ENCODE measurements at regions of chr19 and their contacts with region 1.

Region 1: DNA sequence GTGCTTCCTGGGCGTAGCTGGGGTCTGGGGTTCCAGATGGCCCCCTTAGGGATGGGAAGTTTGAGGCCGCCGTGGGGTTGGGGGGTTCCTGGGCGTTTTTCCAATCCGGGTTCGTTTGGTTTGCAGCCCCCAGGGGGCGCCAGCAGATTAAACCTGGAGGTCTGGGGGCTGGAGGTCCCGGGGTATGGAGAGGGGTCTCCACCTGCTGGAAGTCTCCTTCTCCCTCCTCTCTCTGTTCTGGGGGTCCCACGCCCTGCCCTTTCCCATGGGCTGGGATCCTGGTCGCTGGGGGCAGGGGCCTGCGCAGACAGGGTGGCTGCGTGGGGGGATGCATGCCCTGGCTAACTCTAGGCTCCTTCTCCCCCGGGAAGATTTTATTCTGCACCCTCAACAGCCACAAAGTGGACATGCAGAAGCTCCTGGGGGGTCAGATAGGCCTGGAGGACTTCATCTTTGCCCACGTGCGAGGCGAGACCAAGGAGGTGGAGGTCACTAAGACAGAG is 897 bp downstream of the GIPC3 start:
- DNase-seq: peak in 8 of 9 experiments; percentile 31 to 79 (median 56)
- ATAC-seq: peak; percentile 63
- H3K4me3 ChIP-seq: peak overlapping the region; percentile 45 to 51
- H3K4me3 Mint-ChIP-seq: peak overlapping the region; percentile 53
- H3K27ac ChIP-seq: no peak overlapping the region
- H3K27ac Mint-ChIP-seq: no peak overlapping the region
- H3K4me1 ChIP-seq: no peaks in the 10 kb centered on the region
- H3K4me1 Mint-ChIP-seq: no peaks in the 10 kb centered on the region
- H3K27me3 ChIP-seq: no peaks in the 10 kb centered on the region
- H3K27me3 Mint-ChIP-seq: no peaks in the 10 kb centered on the region
- CTCF ChIP-seq: peak; percentile 65

Region 2: DNA sequence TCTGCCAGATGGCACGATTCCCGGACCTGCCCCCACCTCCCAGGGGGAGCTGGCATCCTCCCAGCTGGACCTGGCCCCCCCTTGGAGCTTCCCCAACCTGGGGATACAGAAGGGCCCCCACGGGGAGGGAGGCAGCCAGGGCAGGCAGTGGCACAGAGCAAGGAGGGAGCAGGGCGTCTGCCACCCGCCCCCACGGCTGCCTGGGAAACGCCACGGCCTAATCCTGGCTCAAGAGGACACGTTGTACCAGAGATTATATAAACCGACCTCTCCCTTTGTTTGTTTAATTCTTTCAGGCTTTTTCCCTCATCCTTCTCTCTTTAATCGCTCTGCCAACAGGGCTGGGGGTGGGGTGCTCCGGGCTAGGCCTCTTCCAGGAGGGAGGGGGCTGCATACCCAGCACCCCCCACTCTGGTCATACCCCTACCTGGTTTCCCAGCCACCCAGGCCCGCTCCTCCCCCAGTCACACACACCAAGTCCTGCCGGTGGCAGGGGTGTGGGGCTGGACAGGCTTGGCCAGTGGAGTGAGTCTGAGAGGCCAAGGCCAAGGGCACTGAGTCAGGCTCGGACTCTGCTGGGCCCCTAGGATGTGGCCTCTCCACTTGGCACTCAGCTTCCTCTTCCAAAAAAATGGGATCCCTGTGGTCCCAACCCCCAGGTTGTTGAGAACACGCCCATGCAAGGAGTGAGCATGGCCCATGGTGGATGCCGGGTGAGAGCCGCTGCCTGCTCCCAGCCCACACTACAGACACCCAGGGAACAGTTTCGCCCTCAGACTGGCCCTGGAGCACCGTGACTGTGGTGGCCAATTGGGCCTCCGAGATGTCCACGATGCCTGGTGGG is 249.3 kb before region 1 on chr19:
- CTCF ChIA-PET with region 1: no interaction called
- POLR2A ChIA-PET with region 1: no interaction called
- intact Hi-C with region 1: no loop called
- DNase-seq: no peak
- ATAC-seq: no peak
- H3K4me3 ChIP-seq: no peak overlapping the region
- H3K4me3 Mint-ChIP-seq: no peak overlapping the region
- H3K27ac ChIP-seq: no peak overlapping the region
- H3K27ac Mint-ChIP-seq: no peak overlapping the region
- H3K4me1 ChIP-seq: peaks cover 12% of the 10 kb centered on the region
- H3K4me1 Mint-ChIP-seq: peaks cover 11% of the 10 kb centered on the region
- H3K27me3 ChIP-seq: peaks cover 0 to 3% of the 10 kb centered on the region in 2 experiments
- H3K27me3 Mint-ChIP-seq: no peaks in the 10 kb centered on the region
- CTCF ChIP-seq: no peak

Region 3: DNA sequence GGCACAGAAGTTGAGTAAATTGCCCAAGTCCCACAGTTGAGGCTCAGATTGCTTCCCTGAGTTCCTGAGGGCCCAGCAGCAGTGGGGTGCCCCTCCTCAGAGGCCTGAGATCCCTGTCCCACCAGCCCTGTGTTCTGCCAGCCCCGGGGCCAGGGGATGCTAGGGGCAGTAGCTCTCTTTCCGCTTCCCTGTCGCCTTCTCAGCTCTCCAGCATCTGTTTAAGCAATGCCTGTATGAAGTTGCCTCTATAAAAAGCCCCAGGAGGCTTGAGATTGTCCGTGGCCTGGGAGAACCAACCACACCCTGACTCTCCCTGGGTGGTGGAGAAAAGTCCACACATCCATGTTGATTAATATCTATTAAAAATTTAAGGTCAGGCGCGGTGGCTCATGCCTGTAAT is 20.1 kb before region 1 on chr19:
- CTCF ChIA-PET with region 1: interaction called, 13 read pairs
- POLR2A ChIA-PET with region 1: no interaction called
- intact Hi-C with region 1: no loop called
- DNase-seq: no peak
- ATAC-seq: no peak
- H3K4me3 ChIP-seq: no peak overlapping the region
- H3K4me3 Mint-ChIP-seq: no peak overlapping the region
- H3K27ac ChIP-seq: no peak overlapping the region
- H3K27ac Mint-ChIP-seq: no peak overlapping the region
- H3K4me1 ChIP-seq: no peaks in the 10 kb centered on the region
- H3K4me1 Mint-ChIP-seq: no peaks in the 10 kb centered on the region
- H3K27me3 ChIP-seq: no peaks in the 10 kb centered on the region
- H3K27me3 Mint-ChIP-seq: no peaks in the 10 kb centered on the region
- CTCF ChIP-seq: no peak

Region 4: DNA sequence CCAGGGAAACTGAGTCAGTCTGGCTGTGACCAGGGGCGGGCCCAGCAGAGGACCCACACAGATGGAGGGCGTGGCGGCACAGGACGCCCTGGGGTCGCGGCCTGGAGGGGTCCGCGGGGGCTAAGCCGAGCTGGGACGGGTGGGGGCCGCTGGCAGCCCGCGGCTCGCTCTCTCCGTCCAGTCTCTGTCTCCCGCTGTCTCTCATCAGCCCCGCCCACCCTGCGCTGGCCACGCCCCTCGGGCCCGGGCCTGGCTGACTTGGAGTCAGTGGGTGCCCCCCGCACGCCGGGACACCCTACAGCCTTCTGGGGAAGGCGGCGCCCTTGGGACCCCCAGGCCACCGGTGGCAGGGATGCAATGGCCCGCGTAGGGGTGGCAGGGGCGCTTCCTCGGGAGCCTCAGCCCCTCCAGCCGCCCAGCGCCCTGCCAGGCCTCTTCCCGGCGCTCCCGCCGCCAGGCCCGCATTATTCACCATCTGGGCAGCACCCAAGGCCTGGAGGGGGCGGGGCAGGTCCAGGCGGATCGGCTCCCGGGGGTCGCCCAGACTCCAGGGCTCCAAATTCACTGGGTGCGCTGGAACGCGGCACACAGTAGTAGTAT is 20.6 kb after region 1 on chr19 and contains the start of gene TBXA2R:
- CTCF ChIA-PET with region 1: interaction called, 21 read pairs
- POLR2A ChIA-PET with region 1: interaction called, 6 read pairs
- intact Hi-C with region 1: no loop called
- DNase-seq: peak; percentile 15 to 78 (median 59)
- ATAC-seq: peak; percentile 22
- H3K4me3 ChIP-seq: peak within 1 kb of the TSS; percentile 20 to 58
- H3K4me3 Mint-ChIP-seq: peak within 1 kb of the TSS; percentile 67
- H3K27ac ChIP-seq: peak within 1 kb of the TSS in 1 of 2 experiments; percentile 17
- H3K27ac Mint-ChIP-seq: peak within 1 kb of the TSS; percentile 41
- H3K4me1 ChIP-seq: peaks cover 47% of the 10 kb centered on the region
- H3K4me1 Mint-ChIP-seq: peaks cover 15% of the 10 kb centered on the region
- H3K27me3 ChIP-seq: no peaks in the 10 kb centered on the region
- H3K27me3 Mint-ChIP-seq: no peaks in the 10 kb centered on the region
- CTCF ChIP-seq: no peak
- total RNA-seq, gene TBXA2R: 2.3 to 2.6 TPM

Region 5: DNA sequence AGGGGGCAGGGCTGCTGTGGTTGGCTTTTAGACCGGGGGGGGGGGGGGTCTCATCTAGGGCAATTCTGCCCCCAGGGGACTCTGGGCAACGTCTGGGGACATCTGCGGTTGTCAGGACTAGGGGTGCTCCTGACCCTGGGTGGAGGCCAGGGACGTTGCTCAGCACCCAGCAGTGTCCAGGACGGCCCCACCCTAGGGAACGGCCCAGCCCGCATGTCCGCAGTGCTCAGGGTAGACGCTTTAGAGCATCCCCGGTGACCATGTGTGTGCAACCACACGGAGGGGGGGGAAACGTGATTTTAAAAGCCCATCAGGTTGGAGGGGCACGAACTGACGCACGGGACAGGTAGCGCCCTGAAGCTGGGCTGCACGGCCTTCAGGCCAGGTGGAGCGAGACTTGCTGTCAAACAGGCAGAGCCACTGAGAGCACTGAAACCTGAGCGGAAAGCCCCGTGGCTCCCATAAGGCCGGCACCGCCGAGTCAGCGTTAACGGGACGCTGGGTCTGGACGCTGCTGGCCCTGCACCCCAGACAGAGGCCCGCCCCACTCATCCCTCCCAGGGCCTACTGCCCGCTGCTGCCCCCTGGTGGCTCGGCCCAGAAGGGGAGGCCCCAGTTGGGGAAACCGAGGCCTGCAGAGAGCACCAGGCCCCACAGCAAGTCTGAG is 32.1 kb after region 1 on chr19:
- CTCF ChIA-PET with region 1: interaction called, 55 read pairs
- POLR2A ChIA-PET with region 1: interaction called, 3 read pairs
- intact Hi-C with region 1: loop called (anchors 1 kb)
- DNase-seq: peak in 8 of 9 experiments; percentile 31 to 79 (median 56)
- ATAC-seq: peak; percentile 68
- H3K4me3 ChIP-seq: no peak overlapping the region
- H3K4me3 Mint-ChIP-seq: no peak overlapping the region
- H3K27ac ChIP-seq: no peak overlapping the region
- H3K27ac Mint-ChIP-seq: no peak overlapping the region
- H3K4me1 ChIP-seq: peaks cover 13% of the 10 kb centered on the region
- H3K4me1 Mint-ChIP-seq: peaks cover 10% of the 10 kb centered on the region
- H3K27me3 ChIP-seq: no peaks in the 10 kb centered on the region
- H3K27me3 Mint-ChIP-seq: no peaks in the 10 kb centered on the region
- CTCF ChIP-seq: peak; percentile 69

Region 6: DNA sequence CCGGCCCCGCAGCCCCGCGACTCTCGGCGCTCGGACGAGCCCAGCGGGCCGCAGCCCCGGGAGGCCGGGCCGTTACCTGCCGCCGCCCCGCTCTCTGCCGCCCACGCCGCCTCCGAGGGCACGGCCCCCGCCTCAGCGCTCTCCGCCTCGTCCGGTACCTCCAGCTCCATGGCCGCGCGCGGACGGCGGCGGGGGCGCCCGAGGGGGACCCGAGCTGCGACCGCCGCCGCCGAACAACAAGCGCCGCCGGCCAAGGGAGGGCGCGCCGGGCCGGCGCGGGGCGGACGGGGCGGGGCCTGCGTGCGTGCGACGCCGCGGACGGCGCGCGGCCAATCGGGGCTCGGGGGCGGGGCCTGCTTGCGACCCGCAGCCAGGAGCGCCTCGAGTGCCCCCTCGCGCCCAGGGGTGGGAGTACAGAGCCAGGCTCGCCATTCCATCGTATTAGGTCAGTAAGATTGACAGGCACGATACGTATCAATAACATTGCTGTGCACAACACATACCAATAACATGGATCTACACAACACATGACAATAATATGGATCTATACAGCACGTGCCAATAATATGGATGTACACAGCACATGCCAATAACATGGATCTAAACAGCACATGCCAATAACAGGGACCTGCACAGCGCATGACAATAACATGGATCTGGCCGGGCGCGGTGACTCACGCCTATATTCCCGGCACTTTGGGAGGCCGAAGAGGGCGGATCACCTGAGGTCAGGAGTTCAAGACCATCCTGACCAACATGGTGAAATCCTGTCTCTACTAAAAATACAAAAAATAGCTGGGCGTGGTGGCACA is 114.3 kb after region 1 on chr19 and contains the start of gene PIP5K1C:
- CTCF ChIA-PET with region 1: no interaction called
- POLR2A ChIA-PET with region 1: no interaction called
- intact Hi-C with region 1: loop called in 1 of 2 experiments (anchors 10 kb)
- DNase-seq: peak; percentile 84 to 97 (median 92)
- ATAC-seq: peak; percentile 100
- H3K4me3 ChIP-seq: peak within 1 kb of the TSS; percentile 61 to 63
- H3K4me3 Mint-ChIP-seq: peak within 1 kb of the TSS; percentile 88
- H3K27ac ChIP-seq: no peak within 1 kb of the TSS
- H3K27ac Mint-ChIP-seq: peak within 1 kb of the TSS; percentile 81
- H3K4me1 ChIP-seq: peaks cover 19% of the 10 kb centered on the region
- H3K4me1 Mint-ChIP-seq: peaks cover 29% of the 10 kb centered on the region
- H3K27me3 ChIP-seq: no peaks in the 10 kb centered on the region
- H3K27me3 Mint-ChIP-seq: peaks cover 1% of the 10 kb centered on the region
- CTCF ChIP-seq: peak; percentile 82
- total RNA-seq, gene PIP5K1C: 11.4 to 12.2 TPM

Region 7: DNA sequence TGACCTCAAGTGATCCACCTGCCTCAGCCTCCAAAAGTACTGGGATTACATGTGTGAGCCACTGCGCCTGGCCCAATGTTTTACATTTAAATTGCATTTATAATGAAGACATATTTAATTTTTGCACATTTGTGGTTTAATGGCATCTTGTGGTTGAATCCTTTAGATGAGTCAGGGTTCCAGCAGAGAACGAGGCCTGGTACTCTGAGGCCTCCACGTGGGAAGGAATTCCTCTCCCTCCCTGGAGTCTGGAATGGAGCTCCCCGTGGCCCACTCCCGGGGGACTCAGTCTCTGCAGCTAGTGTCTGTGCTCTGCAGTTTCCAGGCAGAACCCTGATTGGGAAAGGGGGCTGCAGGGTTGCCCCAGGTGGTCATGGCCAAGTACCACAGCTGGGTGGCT is 258.4 kb after region 1 on chr19:
- CTCF ChIA-PET with region 1: no interaction called
- POLR2A ChIA-PET with region 1: no interaction called
- intact Hi-C with region 1: no loop called
- DNase-seq: no peak
- ATAC-seq: no peak
- H3K4me3 ChIP-seq: no peak overlapping the region
- H3K4me3 Mint-ChIP-seq: no peak overlapping the region
- H3K27ac ChIP-seq: no peak overlapping the region
- H3K27ac Mint-ChIP-seq: no peak overlapping the region
- H3K4me1 ChIP-seq: no peaks in the 10 kb centered on the region
- H3K4me1 Mint-ChIP-seq: no peaks in the 10 kb centered on the region
- H3K27me3 ChIP-seq: no peaks in the 10 kb centered on the region
- H3K27me3 Mint-ChIP-seq: no peaks in the 10 kb centered on the region
- CTCF ChIP-seq: no peak

Measured in CD8-positive, alpha-beta T cell (primary cell).